Right ventricle myocardium inferior (tissue), 1 donor: ENCODE measurements at regions of chr16 and their contacts with region 1.

Region 1: DNA sequence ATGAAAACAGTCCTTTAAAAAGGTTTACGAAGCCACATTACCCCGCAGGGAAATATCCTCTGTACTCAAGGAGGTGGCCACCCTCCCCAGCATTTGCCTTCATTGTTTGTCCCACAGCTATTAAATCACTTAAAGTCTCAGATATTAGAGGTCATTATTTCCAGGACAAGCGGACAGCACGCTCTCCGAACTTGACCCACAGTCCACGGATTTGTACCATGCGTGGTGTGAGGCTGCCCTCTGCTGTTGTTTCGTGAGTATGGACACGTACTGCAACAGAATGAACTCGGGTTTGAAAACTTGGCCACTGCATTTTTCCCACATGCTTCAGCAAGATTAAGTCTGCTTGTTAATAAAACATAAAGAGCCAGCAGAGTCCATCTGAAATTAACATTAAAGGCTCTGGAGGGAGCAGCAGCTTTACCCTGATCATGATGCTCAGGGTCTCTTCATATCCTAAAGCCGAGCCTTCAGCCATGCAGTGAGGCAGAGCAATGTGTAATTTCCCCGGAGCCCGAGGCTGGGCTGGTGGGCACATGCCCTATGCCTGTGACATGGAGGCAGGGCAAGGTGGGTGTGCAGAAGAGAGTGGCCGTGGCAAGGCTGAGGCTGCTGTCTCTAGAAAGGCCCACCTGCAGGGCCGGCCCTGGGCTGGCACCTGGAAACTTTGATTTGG is 19.7 kb downstream of the MEAK7 start:
- DNase-seq: peak; percentile 78
- ATAC-seq: peak; percentile 78

Region 2: GRCh38 chr16:83826146-83826913 is 658.4 kb before region 1 on chr16:
- intact Hi-C with region 1: loop called (anchors 5 kb)
- DNase-seq: peak; percentile 93
- ATAC-seq: peak; percentile 87

Region 3: GRCh38 chr16:83956336-83957289 is 528.1 kb before region 1 on chr16:
- intact Hi-C with region 1: loop called (anchors 5 kb)
- DNase-seq: peak; percentile 90
- ATAC-seq: peak; percentile 18

Region 4: DNA sequence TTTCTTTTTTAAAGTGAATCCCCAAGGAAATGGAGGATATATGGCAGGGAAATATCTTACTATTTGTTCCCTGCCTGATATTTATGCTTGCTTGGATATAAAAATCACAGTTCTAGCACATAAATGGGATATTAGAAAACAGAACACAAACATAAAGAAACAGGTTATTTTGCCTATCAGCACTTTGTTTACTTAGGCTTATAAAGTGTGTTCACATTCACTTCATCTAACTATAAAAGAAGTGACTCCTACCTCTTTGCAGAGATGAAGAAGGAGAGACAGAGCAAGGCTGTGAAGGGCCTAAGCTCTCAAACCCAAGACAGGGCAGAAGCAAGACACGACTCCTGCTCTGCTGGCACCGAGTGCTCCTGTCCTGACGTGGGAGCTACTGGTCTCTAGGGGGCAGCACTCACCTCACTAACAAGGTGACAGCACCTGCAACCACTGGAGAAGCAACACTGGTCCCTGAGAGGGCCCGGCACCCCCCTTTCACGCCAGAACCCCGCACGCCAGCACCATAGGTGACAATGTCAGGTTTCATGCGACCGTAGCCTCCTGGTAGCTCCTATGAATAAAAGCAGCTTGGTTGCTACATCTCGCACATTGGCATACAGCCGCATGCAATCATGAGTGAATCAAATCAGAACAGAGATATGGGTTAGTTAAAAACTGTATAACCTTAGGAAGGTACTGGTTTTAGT is 400.0 kb before region 1 on chr16:
- intact Hi-C with region 1: loop called (anchors 10 kb)
- DNase-seq: peak; percentile 70
- ATAC-seq: peak; percentile 38

Region 5: DNA sequence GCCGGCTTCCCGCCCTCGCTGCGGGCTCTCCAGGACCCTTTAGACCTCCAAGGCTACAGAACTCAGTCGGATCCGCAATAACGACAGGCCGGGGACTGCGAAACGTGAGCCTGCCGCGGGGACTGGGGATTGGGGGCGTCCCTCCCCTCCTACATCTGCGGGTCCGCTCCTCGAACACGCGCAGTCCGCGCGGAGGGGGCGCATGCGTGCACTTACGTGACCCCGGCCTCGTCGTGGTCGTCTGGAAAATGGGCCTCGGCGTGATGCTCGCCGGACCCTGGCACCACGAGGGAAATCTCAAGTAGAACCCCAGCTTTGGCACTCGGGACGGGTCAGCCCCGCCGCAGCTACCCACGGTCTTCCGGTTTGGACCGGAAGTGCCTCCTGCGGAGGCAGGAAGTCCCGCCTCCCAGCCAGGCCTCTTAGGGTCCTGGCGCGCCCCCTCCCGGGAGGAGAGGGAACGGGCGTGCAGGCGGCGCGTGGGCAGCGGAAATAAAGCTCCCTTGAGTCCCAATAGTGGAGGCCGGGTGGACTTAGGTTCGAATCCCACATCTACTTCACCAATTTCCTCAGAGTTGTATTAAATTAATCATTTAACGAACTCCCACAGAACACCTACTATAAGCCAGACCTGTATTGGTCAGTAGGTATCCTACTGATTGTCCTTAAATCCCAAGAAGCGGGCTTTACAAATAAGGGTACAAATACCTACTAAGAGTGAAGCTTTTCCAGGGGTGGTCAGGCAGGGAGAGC is 297.9 kb before region 1 on chr16 and contains the start of gene TAF1C:
- intact Hi-C with region 1: loop called (anchors 2 kb)
- DNase-seq: peak; percentile 96
- ATAC-seq: peak; percentile 96
- total RNA-seq, gene TAF1C: 26.5 TPM

Region 6: DNA sequence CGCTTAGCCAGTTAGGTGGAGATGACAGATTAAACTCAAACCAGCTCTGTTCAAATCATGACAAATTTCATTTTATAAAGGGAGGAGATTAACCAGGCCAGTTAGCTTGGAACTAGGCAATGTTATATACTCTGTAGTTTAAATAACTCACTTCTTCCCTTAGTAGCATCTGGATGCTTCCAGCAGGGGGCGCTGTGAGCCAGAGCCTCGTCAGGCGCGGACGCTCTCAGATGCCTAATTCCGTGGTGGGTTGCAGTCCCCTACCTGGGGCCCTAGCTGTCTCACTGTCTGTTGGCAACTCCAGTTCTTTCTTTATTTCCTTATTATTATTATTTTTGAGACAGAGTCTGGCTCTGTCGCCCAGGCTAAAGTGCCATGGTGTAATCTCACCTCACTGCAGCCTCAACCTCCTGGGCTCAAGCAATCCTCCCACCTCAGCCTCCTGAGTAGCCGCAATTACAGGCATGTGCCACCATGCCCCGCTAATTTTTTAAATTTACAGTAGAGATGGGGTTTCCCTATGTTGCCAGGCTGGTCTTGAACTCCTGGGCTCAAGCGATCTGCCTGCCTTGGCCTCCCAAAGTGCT is 207.4 kb before region 1 on chr16:
- intact Hi-C with region 1: loop called (anchors 1 kb)
- DNase-seq: peak; percentile 86
- ATAC-seq: no peak

Region 7: GRCh38 chr16:84504420-84505248 is 19.9 kb after region 1 on chr16 and contains the start of gene MEAK7:
- intact Hi-C with region 1: no loop called
- DNase-seq: peak; percentile 99
- ATAC-seq: peak; percentile 98
- total RNA-seq, gene MEAK7: 7.4 TPM

Region 8: DNA sequence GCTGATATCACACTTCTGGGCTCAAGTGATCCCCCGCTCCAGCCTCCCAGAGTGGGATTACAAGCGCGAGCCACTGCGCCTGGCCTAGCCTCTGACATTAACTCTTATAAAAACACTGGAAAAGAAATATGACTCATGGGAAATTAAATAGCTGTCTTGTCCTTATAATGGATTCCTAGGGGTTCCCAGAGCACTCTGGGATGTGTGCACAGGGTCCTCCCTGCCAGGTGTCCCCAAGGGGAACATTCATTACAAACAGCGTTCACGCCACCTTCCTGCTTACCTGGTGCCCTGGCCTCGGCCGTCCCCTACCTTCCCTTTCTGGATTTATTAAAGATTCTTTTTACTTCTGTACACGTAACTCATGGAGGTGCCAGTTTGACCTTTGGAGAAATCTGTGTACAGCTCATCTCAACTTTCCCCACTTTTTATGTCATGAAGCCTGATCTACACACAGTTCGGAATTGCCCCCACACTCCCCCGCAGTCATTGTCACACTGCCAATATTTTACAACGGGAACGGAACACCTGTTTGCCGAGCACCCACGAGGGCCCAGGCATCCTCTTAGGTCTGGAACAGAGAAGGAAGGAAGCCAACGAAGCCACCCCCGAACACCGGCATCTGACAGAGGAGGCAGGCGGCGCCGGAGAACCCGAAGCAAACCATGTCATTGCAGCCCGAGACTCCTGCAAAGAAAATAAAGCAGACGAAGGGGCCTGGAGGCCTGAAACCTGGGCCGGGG is 59.5 kb after region 1 on chr16:
- intact Hi-C with region 1: no loop called
- DNase-seq: no peak
- ATAC-seq: no peak